Right cardiac atrium (tissue), 5 donors: ENCODE measurements at regions of chr11 and their contacts with region 1.

Region 1: DNA sequence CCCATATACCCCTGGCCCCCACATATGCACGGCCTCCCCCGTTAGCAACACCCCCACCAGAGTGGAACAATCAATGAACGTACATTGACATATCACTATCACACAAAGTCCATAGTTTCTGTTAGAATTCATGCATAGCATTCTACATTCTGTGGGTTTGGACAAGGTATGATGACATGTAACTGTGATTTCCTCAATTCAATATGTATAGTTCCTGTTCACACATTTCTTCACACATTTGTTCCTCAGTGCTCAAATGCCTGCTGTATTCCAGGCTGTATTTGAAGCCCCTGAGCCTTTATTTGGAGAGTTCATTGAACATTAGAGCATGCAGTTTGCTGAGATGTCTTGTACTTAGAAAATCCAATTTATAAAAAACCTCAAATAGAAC is 69.9 kb downstream of the PTPRJ start:
- DNase-seq: no peak
- ATAC-seq: no peak
- H3K4me3 ChIP-seq: no peak overlapping the region
- H3K27ac ChIP-seq: no peak overlapping the region
- H3K4me1 ChIP-seq: peaks cover 4% of the 10 kb centered on the region
- H3K27me3 ChIP-seq: no peaks in the 10 kb centered on the region

Region 2: DNA sequence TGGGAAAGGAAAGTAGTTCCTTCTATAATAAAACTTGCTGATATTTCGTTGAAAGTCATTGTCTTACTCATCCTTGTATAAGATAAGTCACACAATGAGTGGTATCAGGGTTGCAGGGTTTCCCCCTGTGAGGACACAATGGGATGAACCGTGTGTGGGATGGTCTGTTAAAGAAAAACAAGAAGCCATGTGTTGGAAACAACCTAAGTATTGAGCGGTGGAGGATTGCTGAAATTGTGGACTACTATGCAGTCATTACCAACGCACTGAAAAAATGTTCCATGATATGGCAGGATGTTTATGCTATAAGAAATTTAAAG is 41.4 kb before region 1 on chr11:
- intact Hi-C with region 1: loop called in 1 of 4 experiments (anchors 2 kb)
- DNase-seq: no peak
- ATAC-seq: no peak
- H3K4me3 ChIP-seq: no peak overlapping the region
- H3K27ac ChIP-seq: no peak overlapping the region
- H3K4me1 ChIP-seq: peaks cover 8% of the 10 kb centered on the region
- H3K27me3 ChIP-seq: no peaks in the 10 kb centered on the region